CD8-positive, alpha-beta T cell (primary cell): ENCODE measurements at regions of chr3 and their contacts with region 1.

Region 1: DNA sequence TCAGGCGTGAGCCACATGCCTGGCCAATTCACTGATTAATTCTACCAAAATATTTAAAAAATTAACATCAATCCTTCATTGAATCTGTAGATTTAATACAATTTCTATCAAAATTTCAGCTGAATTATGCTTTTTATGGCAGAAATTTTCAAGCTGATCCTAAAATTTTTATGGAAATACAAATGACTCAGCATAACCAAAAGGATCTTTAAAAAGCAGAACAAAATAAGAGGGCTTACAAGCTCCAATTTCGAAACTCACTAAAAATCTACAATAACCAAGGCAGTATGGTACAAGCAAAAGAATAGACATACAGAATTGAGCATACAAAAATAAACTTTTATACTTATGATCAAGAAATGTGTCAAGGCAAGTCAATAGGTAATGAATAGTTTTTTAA is 180.4 kb upstream of the CTNNB1 start:
- DNase-seq: no peak
- ATAC-seq: no peak
- H3K4me3 ChIP-seq: no peak overlapping the region
- H3K4me3 Mint-ChIP-seq: no peak overlapping the region
- H3K27ac ChIP-seq: no peak overlapping the region
- H3K27ac Mint-ChIP-seq: no peak overlapping the region
- H3K4me1 ChIP-seq: no peaks in the 10 kb centered on the region
- H3K4me1 Mint-ChIP-seq: no peaks in the 10 kb centered on the region
- H3K27me3 ChIP-seq: no peaks in the 10 kb centered on the region
- H3K27me3 Mint-ChIP-seq: peaks cover 10% of the 10 kb centered on the region
- CTCF ChIP-seq: no peak

Region 2: GRCh38 chr3:40971191-40972168 is 47.4 kb before region 1 on chr3:
- CTCF ChIA-PET with region 1: no interaction called
- POLR2A ChIA-PET with region 1: no interaction called
- intact Hi-C with region 1: loop called in 1 of 2 experiments (anchors 1 kb)
- DNase-seq: peak in 1 of 9 experiments; percentile 44
- ATAC-seq: peak; percentile 29
- H3K4me3 ChIP-seq: no peak overlapping the region
- H3K4me3 Mint-ChIP-seq: no peak overlapping the region
- H3K27ac ChIP-seq: no peak overlapping the region
- H3K27ac Mint-ChIP-seq: peak overlapping the region; percentile 11
- H3K4me1 ChIP-seq: no peaks in the 10 kb centered on the region
- H3K4me1 Mint-ChIP-seq: peaks cover 7% of the 10 kb centered on the region
- H3K27me3 ChIP-seq: no peaks in the 10 kb centered on the region
- H3K27me3 Mint-ChIP-seq: peaks cover 30% of the 10 kb centered on the region
- CTCF ChIP-seq: no peak